B cell (primary cell): ENCODE measurements at regions of chr11 and their contacts with region 1.

Region 1: GRCh38 chr11:65040847-65041621 is at the start of gene SAC3D1:
- DNase-seq: peak; percentile 92
- ATAC-seq: peak; percentile 94
- H3K4me3 ChIP-seq: peak within 1 kb of the TSS; percentile 50 to 80 (median 75)
- H3K4me3 Mint-ChIP-seq: peak within 1 kb of the TSS; percentile 95
- H3K27ac ChIP-seq: peak within 1 kb of the TSS; percentile 67 to 72
- H3K27ac Mint-ChIP-seq: peak within 1 kb of the TSS; percentile 96
- H3K4me1 ChIP-seq: peaks cover 7 to 22% of the 10 kb centered on the region in 2 donors
- H3K4me1 Mint-ChIP-seq: peaks cover 14% of the 10 kb centered on the region
- H3K27me3 ChIP-seq: no peaks in the 10 kb centered on the region
- H3K27me3 Mint-ChIP-seq: no peaks in the 10 kb centered on the region
- CTCF ChIP-seq: no peak
- total RNA-seq, gene SAC3D1: 5.9 and 7.5 TPM in 2 replicates

Region 2: DNA sequence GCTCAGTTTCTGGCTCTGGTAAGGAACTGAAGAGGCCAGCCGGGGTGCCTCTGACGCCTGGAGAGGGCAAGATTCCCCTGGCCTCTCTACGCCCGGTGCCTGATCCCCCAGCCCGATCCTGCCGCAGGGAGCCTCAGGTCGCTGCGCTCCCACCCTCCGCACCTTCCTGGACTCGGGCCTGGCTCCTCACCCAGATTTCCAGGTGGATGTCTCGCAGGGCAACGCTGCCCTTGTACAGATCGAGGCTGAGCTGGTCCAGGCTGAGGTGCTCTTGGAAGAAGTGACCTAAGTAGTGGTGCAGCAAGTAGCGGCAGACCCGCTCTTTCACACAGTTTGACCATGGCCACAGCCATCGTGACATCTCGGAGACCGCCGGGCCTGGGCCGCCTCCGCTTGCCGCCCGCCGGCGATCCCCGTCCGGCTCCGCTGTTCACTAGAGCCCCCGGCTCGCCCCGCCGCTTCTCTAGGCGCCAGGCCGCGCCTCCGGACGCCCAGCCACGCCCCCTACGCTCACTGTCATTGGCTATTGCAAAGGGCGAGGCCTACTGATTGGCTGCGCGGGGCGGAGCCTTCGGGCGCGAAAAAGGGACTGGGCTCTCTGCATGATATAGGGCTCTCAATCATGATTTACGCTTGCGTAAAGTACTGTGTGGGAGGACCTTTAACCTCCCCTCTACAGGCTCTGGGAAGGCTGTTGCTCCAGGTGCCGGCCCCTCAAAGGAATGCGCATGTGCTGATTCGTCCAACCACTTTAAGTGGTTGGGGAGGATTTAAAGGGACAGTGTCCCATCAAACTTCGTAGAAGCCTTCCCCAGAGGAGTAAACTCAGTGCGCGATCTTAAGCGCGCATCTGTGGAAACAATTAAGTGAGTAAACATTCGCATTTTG is 124.0 kb before region 1 on chr11 and contains the start of gene ATG2A:
- CTCF ChIA-PET with region 1: no interaction called
- POLR2A ChIA-PET with region 1: no interaction called
- intact Hi-C with region 1: loop called (anchors 1 kb)
- DNase-seq: peak; percentile 99
- ATAC-seq: peak; percentile 97
- H3K4me3 ChIP-seq: peak within 1 kb of the TSS; percentile 86 to 96 (median 90)
- H3K4me3 Mint-ChIP-seq: peak within 1 kb of the TSS; percentile 88
- H3K27ac ChIP-seq: peak within 1 kb of the TSS; percentile 44 to 84
- H3K27ac Mint-ChIP-seq: peak within 1 kb of the TSS; percentile 91
- H3K4me1 ChIP-seq: peaks cover 19 to 33% of the 10 kb centered on the region in 2 donors
- H3K4me1 Mint-ChIP-seq: peaks cover 34% of the 10 kb centered on the region
- H3K27me3 ChIP-seq: no peaks in the 10 kb centered on the region
- H3K27me3 Mint-ChIP-seq: no peaks in the 10 kb centered on the region
- CTCF ChIP-seq: no peak
- total RNA-seq, gene ATG2A: 38.6 and 43.4 TPM in 2 replicates

Region 3: GRCh38 chr11:64924102-64924851 is 116.8 kb before region 1 on chr11 and contains the start of gene PPP2R5B:
- CTCF ChIA-PET with region 1: no interaction called
- POLR2A ChIA-PET with region 1: interaction called, 4 read pairs
- intact Hi-C with region 1: loop called (anchors 1 kb)
- DNase-seq: peak; percentile 92
- ATAC-seq: peak; percentile 94
- H3K4me3 ChIP-seq: peak within 1 kb of the TSS; percentile 58 to 76 (median 69)
- H3K4me3 Mint-ChIP-seq: peak within 1 kb of the TSS; percentile 97
- H3K27ac ChIP-seq: peak within 1 kb of the TSS; percentile 69 to 81
- H3K27ac Mint-ChIP-seq: peak within 1 kb of the TSS; percentile 97
- H3K4me1 ChIP-seq: peaks cover 14 to 33% of the 10 kb centered on the region in 2 donors
- H3K4me1 Mint-ChIP-seq: peaks cover 22% of the 10 kb centered on the region
- H3K27me3 ChIP-seq: no peaks in the 10 kb centered on the region
- H3K27me3 Mint-ChIP-seq: no peaks in the 10 kb centered on the region
- CTCF ChIP-seq: no peak
- total RNA-seq, gene PPP2R5B: 22.6 and 24.2 TPM in 2 replicates

Region 4: GRCh38 chr11:64947208-64947814 is 93.7 kb before region 1 on chr11:
- CTCF ChIA-PET with region 1: no interaction called
- POLR2A ChIA-PET with region 1: no interaction called
- intact Hi-C with region 1: no loop called
- DNase-seq: no peak
- ATAC-seq: no peak
- H3K4me3 ChIP-seq: no peak overlapping the region
- H3K4me3 Mint-ChIP-seq: no peak overlapping the region
- H3K27ac ChIP-seq: no peak overlapping the region
- H3K27ac Mint-ChIP-seq: no peak overlapping the region
- H3K4me1 ChIP-seq: peaks cover 0 to 4% of the 10 kb centered on the region in 2 donors
- H3K4me1 Mint-ChIP-seq: no peaks in the 10 kb centered on the region
- H3K27me3 ChIP-seq: peaks cover 0 to 3% (median 0%) of the 10 kb centered on the region in 4 experiments
- H3K27me3 Mint-ChIP-seq: peaks cover 17% of the 10 kb centered on the region
- CTCF ChIP-seq: no peak

Region 5: GRCh38 chr11:64996710-64997380 is 44.2 kb before region 1 on chr11 and contains the start of gene BATF2:
- CTCF ChIA-PET with region 1: no interaction called
- POLR2A ChIA-PET with region 1: no interaction called
- intact Hi-C with region 1: no loop called
- DNase-seq: peak; percentile 73
- ATAC-seq: peak; percentile 90
- H3K4me3 ChIP-seq: peak within 1 kb of the TSS in 4 of 5 experiments; percentile 42 to 67 (median 53)
- H3K4me3 Mint-ChIP-seq: peak within 1 kb of the TSS; percentile 77
- H3K27ac ChIP-seq: peak within 1 kb of the TSS in 1 of 2 donors; percentile 60
- H3K27ac Mint-ChIP-seq: peak within 1 kb of the TSS; percentile 74
- H3K4me1 ChIP-seq: peaks cover 15 to 17% of the 10 kb centered on the region in 2 donors
- H3K4me1 Mint-ChIP-seq: peaks cover 26% of the 10 kb centered on the region
- H3K27me3 ChIP-seq: no peaks in the 10 kb centered on the region
- H3K27me3 Mint-ChIP-seq: no peaks in the 10 kb centered on the region
- CTCF ChIP-seq: peak; percentile 25
- total RNA-seq, gene BATF2: 0.51 and 0.62 TPM in 2 replicates

Region 6: GRCh38 chr11:65027213-65028067 is 13.6 kb before region 1 on chr11 and contains the start of gene SNX15:
- CTCF ChIA-PET with region 1: interaction called, 17 read pairs
- POLR2A ChIA-PET with region 1: interaction called, 3 read pairs
- intact Hi-C with region 1: loop called (anchors 1 kb)
- DNase-seq: peak; percentile 96
- ATAC-seq: peak; percentile 88
- H3K4me3 ChIP-seq: peak within 1 kb of the TSS; percentile 43 to 63 (median 53)
- H3K4me3 Mint-ChIP-seq: peak within 1 kb of the TSS; percentile 93
- H3K27ac ChIP-seq: peak within 1 kb of the TSS; percentile 55 to 73
- H3K27ac Mint-ChIP-seq: peak within 1 kb of the TSS; percentile 93
- H3K4me1 ChIP-seq: peaks cover 11 to 19% of the 10 kb centered on the region in 2 donors
- H3K4me1 Mint-ChIP-seq: peaks cover 17% of the 10 kb centered on the region
- H3K27me3 ChIP-seq: no peaks in the 10 kb centered on the region
- H3K27me3 Mint-ChIP-seq: no peaks in the 10 kb centered on the region
- CTCF ChIP-seq: peak; percentile 90
- total RNA-seq, gene SNX15: 28.5 and 30.4 TPM in 2 replicates

Region 7: DNA sequence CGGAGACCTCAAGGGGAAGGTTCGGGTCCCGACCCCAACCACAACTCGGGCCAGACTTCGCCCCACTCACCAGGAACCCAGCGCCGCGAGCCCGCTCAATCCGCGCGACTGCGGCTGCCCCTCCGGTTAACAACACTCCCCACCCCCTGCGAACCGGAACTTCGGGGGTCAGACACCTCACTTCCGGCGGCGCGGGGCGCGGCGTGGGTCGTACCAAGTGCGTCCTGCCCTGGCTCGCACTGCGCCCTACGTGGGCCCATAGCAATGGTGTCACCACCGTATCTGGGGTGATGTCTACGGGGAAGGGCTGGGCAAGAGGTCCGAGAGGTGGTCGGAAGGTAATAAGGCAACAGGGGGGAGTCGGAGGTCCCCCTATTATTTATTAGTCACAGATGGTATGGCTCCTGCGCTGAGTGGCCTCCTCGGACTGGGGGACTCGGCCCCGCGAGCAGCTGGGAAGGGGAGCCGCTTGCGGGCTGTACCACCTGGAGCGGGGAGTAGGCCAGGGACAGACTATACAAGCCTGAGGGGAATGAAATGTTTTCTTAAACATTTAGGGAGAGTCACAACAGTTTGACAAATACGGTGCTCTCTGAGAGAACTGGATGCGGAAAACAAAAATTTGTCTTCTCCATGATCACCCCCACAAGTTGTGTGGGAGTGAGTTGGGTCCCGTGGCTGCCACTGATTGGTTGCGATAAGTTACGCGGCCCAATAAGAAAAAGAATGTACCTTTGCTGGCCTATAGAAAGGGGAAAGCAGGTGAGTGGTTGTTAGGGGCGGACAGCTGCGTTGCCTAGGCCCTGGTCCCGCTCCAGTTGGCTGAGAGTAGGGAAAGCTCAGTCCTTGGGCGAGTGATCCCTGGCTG is 93.6 kb after region 1 on chr11 and contains the start of gene SYVN1:
- CTCF ChIA-PET with region 1: no interaction called
- POLR2A ChIA-PET with region 1: no interaction called
- intact Hi-C with region 1: loop called (anchors 5 kb)
- DNase-seq: peak; percentile 97
- ATAC-seq: peak; percentile 64
- H3K4me3 ChIP-seq: peak within 1 kb of the TSS; percentile 81 to 99 (median 96)
- H3K4me3 Mint-ChIP-seq: peak within 1 kb of the TSS; percentile 97
- H3K27ac ChIP-seq: peak within 1 kb of the TSS; percentile 98 to 99
- H3K27ac Mint-ChIP-seq: peak within 1 kb of the TSS; percentile 99
- H3K4me1 ChIP-seq: peaks cover 36 to 57% of the 10 kb centered on the region in 2 donors
- H3K4me1 Mint-ChIP-seq: peaks cover 66% of the 10 kb centered on the region
- H3K27me3 ChIP-seq: no peaks in the 10 kb centered on the region
- H3K27me3 Mint-ChIP-seq: no peaks in the 10 kb centered on the region
- CTCF ChIP-seq: no peak
- total RNA-seq, gene SYVN1: 187 and 188 TPM in 2 replicates

Region 8: DNA sequence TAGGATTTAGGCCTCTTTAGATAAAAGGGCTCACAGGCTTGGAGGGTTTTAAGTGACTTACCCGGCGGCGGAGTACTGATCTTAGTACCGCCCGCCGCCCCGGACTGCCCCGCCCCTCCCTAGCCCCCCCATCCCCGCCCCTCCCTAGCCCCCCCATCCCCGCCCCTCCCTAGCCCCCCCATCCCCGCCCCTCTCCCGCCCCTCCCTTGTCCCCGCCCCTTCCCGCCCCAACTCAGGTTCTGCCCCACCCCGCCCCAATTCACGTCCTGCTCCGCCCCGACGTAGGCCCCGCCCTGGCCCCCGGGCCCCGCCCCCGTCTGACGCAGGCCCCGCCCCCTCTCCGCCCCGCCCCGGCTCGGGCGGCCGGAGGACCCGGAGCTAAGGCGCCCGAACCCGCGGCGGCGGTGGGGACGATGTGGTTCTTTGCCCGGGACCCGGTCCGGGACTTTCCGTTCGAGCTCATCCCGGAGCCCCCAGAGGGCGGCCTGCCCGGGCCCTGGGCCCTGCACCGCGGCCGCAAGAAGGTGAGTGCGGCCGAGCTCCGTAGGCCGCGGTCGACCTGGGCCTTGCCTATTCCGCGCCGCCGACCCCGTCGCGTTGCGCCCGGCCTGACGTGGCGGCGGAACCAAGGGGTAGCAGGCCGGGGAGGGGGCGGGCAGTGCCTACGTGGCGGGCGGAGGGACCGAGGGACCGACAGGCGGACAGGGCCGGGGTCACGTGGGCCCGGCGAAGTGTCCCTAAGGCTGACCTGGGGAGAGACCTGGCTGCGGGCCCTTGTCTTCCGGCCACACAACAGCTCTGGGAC is 483.9 kb after region 1 on chr11 and contains the start of gene SCYL1:
- CTCF ChIA-PET with region 1: no interaction called
- POLR2A ChIA-PET with region 1: no interaction called
- intact Hi-C with region 1: loop called (anchors 10 kb)
- DNase-seq: peak; percentile 85
- ATAC-seq: peak; percentile 98
- H3K4me3 ChIP-seq: peak within 1 kb of the TSS; percentile 6 to 94 (median 77)
- H3K4me3 Mint-ChIP-seq: peak within 1 kb of the TSS; percentile 85
- H3K27ac ChIP-seq: peak within 1 kb of the TSS; percentile 53 to 84
- H3K27ac Mint-ChIP-seq: peak within 1 kb of the TSS; percentile 88
- H3K4me1 ChIP-seq: peaks cover 39 to 41% of the 10 kb centered on the region in 2 donors
- H3K4me1 Mint-ChIP-seq: peaks cover 39% of the 10 kb centered on the region
- H3K27me3 ChIP-seq: no peaks in the 10 kb centered on the region
- H3K27me3 Mint-ChIP-seq: no peaks in the 10 kb centered on the region
- CTCF ChIP-seq: no peak
- total RNA-seq, gene SCYL1: 72.3 and 85.5 TPM in 2 replicates